ENCODE measurements at regions of chr2 and their contacts with region 1.

Region 1: DNA sequence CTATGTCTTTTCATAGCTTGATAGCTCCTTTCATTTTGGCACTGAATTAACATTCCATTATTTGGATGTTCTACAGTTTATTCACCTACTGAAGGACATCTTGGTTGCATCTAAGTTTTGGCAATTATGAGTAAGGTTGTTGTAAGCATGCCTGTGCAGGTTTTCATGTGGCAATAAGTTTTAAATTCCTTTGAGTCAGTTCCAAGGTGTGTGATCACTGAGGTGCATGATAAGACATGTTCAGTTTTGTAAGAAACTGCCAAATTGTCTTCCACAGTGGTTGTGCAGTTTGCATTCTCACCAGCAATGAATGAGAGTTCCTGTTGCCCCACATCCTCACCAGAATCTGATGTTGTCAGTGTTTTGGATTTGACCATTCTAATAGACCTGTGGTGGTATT is 24.2 kb downstream of the XDH start:
- DNase-seq: no peak
- H3K4me3 Mint-ChIP-seq: no peak overlapping the region
- H3K27ac Mint-ChIP-seq: no peak overlapping the region
- H3K4me1 Mint-ChIP-seq: no peaks in the 10 kb centered on the region
- H3K27me3 Mint-ChIP-seq: no peaks in the 10 kb centered on the region

Region 2: DNA sequence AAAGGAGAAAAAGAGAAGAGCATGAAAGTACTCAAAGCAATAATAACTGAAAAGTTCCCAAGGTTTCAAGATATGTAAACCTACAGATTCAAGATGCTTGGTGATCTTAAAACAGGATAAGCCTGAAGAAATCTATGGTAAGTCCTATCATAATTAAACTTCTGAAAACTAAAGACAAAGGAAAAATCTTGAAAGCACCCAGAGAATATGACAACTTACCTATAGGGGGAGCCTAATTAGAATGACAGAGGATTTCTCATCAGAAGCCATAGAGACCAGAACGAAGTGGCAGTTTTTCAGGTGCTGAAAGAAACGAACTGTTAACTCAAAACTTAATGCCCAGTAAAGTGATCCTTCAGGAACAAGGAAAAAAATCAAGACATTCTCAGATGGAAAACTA is 35.5 kb before region 1 on chr2:
- CTCF ChIA-PET with region 1: no interaction called
- POLR2A ChIA-PET with region 1: no interaction called
- intact Hi-C with region 1: no loop called
- DNase-seq: no peak
- H3K4me3 Mint-ChIP-seq: no peak overlapping the region
- H3K27ac Mint-ChIP-seq: no peak overlapping the region
- H3K4me1 Mint-ChIP-seq: no peaks in the 10 kb centered on the region
- H3K27me3 Mint-ChIP-seq: peaks cover 38% of the 10 kb centered on the region

Region 3: DNA sequence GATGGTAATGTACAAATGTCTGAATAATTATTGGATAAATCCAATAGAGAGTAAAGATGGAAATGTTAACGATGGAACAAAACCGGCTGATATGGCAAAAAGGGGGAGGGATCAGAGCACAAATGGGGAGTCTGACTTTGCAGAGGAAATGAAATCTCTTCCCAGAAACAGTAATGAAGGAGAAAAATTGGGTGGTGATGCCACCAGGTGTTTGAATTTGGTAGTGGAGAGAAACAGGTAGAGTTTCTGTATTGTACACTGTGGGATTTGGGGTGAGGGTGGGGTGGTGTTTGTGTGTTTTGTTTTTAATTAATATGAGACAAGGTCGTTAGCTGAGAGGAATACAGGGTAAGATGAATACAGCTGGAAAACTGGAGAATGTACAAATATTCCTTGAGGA is 44.6 kb after region 1 on chr2:
- CTCF ChIA-PET with region 1: no interaction called
- POLR2A ChIA-PET with region 1: no interaction called
- intact Hi-C with region 1: loop called (anchors 5 kb)
- DNase-seq: no peak
- H3K4me3 Mint-ChIP-seq: no peak overlapping the region
- H3K27ac Mint-ChIP-seq: no peak overlapping the region
- H3K4me1 Mint-ChIP-seq: peaks cover 7% of the 10 kb centered on the region
- H3K27me3 Mint-ChIP-seq: peaks cover 7% of the 10 kb centered on the region

Measured in activated CD4-positive, alpha-beta memory T cell treated with anti-CD3 and anti-CD28 coated beads for 36 hours (primary cell).